ENCODE measurements at regions of chr9 and their contacts with region 1.

Region 1: GRCh38 chr9:94805585-94805984 is 79.1 kb downstream of the AOPEP start:
- DNase-seq: peak in 2 of 4 donors; percentile 70 to 81
- ATAC-seq: peak; percentile 90
- H3K4me3 ChIP-seq: no peak overlapping the region
- H3K27ac ChIP-seq: peak overlapping the region; percentile 69 to 81
- H3K4me1 ChIP-seq: peaks cover 7 to 22% of the 10 kb centered on the region in 2 donors
- H3K27me3 ChIP-seq: no peaks in the 10 kb centered on the region
- CTCF ChIP-seq: no peak

Region 2: GRCh38 chr9:94847486-94847885 is 41.9 kb after region 1 on chr9:
- intact Hi-C with region 1: no loop called
- DNase-seq: no peak
- ATAC-seq: peak; percentile 54
- H3K4me3 ChIP-seq: no peak overlapping the region
- H3K27ac ChIP-seq: peak overlapping the region in 1 of 2 donors; percentile 66
- H3K4me1 ChIP-seq: no peaks in the 10 kb centered on the region
- H3K27me3 ChIP-seq: no peaks in the 10 kb centered on the region
- CTCF ChIP-seq: no peak

Region 3: GRCh38 chr9:94860968-94861871 is 55.6 kb after region 1 on chr9:
- intact Hi-C with region 1: loop called in 1 of 2 experiments (anchors 10 kb)
- DNase-seq: peak in 1 of 4 donors; percentile 44
- ATAC-seq: peak; percentile 27
- H3K4me3 ChIP-seq: no peak overlapping the region
- H3K27ac ChIP-seq: peak overlapping the region in 1 of 2 donors; percentile 57
- H3K4me1 ChIP-seq: peaks cover 17 to 44% of the 10 kb centered on the region in 2 donors
- H3K27me3 ChIP-seq: no peaks in the 10 kb centered on the region
- CTCF ChIP-seq: no peak